ENCODE measurements at regions of chr20 and their contacts with region 1.

Region 1: DNA sequence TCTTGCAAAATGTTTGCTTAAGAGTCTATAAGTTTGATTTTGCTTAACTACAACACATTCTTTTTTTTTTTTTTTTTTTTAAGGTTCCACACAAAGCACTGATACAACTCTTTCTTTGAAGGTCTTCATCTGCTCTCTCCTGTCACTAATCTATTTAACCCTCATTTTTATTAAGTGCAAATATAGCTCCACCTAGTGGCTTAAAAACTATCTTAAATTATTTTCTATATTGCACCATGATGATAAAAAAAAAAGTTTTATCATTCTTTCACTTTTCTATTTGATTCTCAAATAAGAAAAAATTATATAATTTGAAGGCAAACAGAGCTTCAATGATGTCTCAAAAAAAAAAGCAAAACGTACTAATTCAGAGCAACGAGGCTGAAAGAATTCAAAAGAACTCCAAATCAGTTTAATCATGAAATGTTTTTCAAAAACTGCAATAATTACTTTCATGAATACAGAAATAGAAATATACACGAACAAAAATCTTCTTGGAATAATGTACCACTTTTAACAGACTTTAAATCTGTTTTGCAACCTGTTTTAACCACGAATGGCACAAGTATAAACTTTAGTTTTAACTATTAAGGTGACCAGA is 12.8 kb downstream of the ESF1 start:
- DNase-seq: peak in 3 of 14 experiments; percentile 14 to 38 (median 20)
- ATAC-seq: no peak
- H3K4me3 ChIP-seq: no peak overlapping the region
- H3K4me3 Mint-ChIP-seq: no peak overlapping the region
- H3K27ac ChIP-seq: no peak overlapping the region
- H3K27ac Mint-ChIP-seq: no peak overlapping the region
- H3K4me1 ChIP-seq: no peaks in the 10 kb centered on the region
- H3K4me1 Mint-ChIP-seq: peaks cover 9% of the 10 kb centered on the region
- H3K27me3 ChIP-seq: no peaks in the 10 kb centered on the region
- H3K27me3 Mint-ChIP-seq: no peaks in the 10 kb centered on the region
- CTCF ChIP-seq: peak; percentile 83

Region 2: DNA sequence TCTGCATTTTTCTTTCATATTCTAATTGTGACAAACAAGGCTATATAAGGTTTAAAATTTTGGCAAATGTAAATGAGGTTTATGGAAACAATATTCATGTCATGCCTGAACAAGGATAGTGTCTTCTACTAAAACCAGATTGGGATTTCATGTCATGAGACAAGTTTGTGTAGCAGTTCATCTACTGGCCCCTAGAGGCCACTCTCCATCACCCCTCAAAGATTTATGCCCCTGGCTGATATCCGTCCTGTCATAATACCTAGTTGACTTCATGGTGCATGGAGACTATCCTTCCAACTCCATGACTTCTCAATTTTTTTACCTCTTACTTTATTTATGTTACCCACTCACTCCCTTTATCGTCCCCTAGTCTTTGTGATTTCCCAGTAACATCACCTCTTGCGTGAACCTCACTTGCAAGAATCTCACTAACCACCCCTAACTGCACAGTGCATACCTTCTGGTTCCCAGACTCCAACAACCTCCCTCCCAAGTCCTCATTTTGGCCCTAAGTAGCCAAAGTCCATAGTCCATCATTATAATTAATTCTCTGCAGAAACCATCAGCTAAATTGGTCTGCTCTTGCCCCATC is 313.0 kb before region 1 on chr20:
- CTCF ChIA-PET with region 1: no interaction called
- POLR2A ChIA-PET with region 1: no interaction called
- intact Hi-C with region 1: loop called in 1 of 2 experiments (anchors 5 kb)
- DNase-seq: peak in 3 of 14 experiments; percentile 8 to 27 (median 19)
- ATAC-seq: no peak
- H3K4me3 ChIP-seq: no peak overlapping the region
- H3K4me3 Mint-ChIP-seq: no peak overlapping the region
- H3K27ac ChIP-seq: no peak overlapping the region
- H3K27ac Mint-ChIP-seq: no peak overlapping the region
- H3K4me1 ChIP-seq: no peaks in the 10 kb centered on the region
- H3K4me1 Mint-ChIP-seq: no peaks in the 10 kb centered on the region
- H3K27me3 ChIP-seq: no peaks in the 10 kb centered on the region
- H3K27me3 Mint-ChIP-seq: no peaks in the 10 kb centered on the region
- CTCF ChIP-seq: peak; percentile 28

Measured in CD4-positive, alpha-beta T cell (primary cell).